ENCODE measurements at regions of chr2 and their contacts with region 1.

Region 1: DNA sequence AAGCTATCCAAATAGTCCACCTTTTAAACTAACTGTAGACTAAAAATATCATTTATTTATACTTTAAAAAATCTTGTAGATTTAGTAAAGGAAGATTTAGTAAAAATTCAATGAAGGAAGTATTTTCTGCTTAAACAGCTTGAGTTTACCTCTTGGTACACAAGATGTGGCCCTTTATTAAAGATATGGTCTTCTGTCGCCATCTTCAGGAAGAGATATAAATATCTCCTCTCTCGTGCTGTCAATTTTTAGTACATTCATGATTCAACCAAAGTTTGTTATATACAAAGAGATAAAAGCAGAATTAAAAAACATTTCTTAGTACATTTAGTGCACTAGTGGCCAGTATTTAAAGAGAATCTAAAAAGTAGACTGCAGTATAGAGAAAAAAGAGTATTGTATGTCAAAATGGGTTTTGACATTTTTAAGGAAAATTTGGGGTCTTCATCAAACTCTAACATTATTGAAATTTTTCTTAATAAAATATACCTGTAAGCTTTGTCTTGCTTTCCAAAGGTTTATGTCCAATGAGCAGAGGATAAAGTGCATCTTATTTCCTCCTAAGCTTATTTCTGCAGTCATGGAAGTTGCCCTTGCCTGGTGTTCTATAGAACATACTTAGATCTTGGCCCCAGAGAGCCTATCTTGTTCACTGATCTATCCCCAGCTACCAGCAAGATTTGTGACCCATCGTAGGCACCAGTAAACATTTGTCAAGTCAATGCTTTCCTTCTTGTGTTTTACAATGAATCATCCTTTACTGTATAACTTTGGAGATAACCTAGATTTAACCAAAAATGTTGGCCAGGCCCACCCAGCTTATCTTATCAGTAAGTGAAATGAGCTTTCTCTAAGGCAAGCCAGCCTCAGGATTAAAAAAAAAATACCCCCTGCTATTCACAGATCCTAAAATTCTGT is 18.5 kb upstream of the EML6 start:
- H3K4me3 ChIP-seq: no peak overlapping the region
- H3K27ac ChIP-seq: no peak overlapping the region
- H3K4me1 ChIP-seq: no peaks in the 10 kb centered on the region
- CTCF ChIP-seq: peak; percentile 47; the same call in 1 of the 2 replicates

Region 2: GRCh38 chr2:54176577-54176976 is 528.4 kb before region 1 on chr2:
- CTCF ChIA-PET with region 1: interaction called, 21 read pairs
- POLR2A ChIA-PET with region 1: interaction called, 3 read pairs
- H3K4me3 ChIP-seq: no peak overlapping the region
- H3K27ac ChIP-seq: no peak overlapping the region
- H3K4me1 ChIP-seq: no peaks in the 10 kb centered on the region
- CTCF ChIP-seq: peak; percentile 55; the same call in 1 of the 2 replicates

Region 3: GRCh38 chr2:54665436-54665856 is 39.5 kb before region 1 on chr2:
- CTCF ChIA-PET with region 1: interaction called, 64 read pairs
- POLR2A ChIA-PET with region 1: no interaction called
- H3K4me3 ChIP-seq: no peak overlapping the region
- H3K27ac ChIP-seq: no peak overlapping the region
- H3K4me1 ChIP-seq: no peaks in the 10 kb centered on the region
- CTCF ChIP-seq: 0 out of 2 replicates have a peak, but pooled peaks have one; percentile 17

Region 4: GRCh38 chr2:54691445-54692135 is 13.4 kb before region 1 on chr2:
- CTCF ChIA-PET with region 1: interaction called, 10 read pairs
- POLR2A ChIA-PET with region 1: no interaction called
- H3K4me3 ChIP-seq: no peak overlapping the region
- H3K27ac ChIP-seq: no peak overlapping the region
- H3K4me1 ChIP-seq: no peaks in the 10 kb centered on the region
- CTCF ChIP-seq: no peak

Region 5: DNA sequence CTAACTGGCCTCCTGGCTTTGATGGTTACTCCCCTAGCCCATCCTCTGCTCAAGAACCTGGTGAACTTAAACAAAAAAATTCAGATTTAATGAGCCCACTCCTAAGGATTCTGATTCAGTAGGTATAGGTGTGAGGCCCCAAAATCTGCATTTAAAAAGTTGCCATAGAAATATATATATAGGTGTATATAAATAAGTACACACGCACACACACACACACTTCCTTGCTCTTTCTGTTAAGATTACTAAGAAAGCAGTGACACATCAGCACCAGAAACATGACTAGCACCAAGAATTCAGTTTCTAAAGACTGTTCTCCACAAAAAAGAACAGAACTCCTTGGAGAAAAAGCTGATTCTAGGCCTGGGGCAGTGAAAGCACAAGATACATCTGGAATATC is 36.3 kb after region 1 on chr2:
- CTCF ChIA-PET with region 1: no interaction called
- POLR2A ChIA-PET with region 1: no interaction called
- H3K4me3 ChIP-seq: no peak overlapping the region
- H3K27ac ChIP-seq: no peak overlapping the region
- H3K4me1 ChIP-seq: 0 out of 2 replicates have a peak, but pooled peaks cover 3% of the 10 kb centered on the region
- CTCF ChIP-seq: no peak

Region 6: GRCh38 chr2:54809819-54810218 is 104.9 kb after region 1 on chr2:
- CTCF ChIA-PET with region 1: no interaction called
- POLR2A ChIA-PET with region 1: no interaction called
- H3K4me3 ChIP-seq: no peak overlapping the region
- H3K27ac ChIP-seq: no peak overlapping the region
- H3K4me1 ChIP-seq: no peaks in the 10 kb centered on the region
- CTCF ChIP-seq: no peak

Region 7: DNA sequence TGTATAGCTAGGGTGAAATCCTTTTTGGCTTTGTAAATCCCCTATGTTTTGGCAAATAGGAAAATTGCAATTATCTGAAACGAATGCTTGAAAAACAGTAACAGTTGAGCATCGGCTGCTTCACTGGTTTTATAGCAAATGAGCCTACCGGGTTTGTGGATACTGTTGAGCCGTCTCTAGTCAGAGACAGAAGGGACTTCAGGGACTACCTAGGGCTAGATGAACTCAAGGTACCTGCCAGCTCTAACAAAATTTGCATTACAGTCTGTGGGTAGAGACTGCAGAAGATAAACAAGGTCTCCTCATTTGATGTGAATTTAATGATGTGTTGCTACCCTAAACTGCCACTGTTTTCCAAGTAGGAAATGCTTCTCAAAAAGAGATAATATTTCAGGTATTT is 119.6 kb after region 1 on chr2:
- CTCF ChIA-PET with region 1: no interaction called
- POLR2A ChIA-PET with region 1: no interaction called
- H3K4me3 ChIP-seq: no peak overlapping the region
- H3K27ac ChIP-seq: no peak overlapping the region
- H3K4me1 ChIP-seq: no peaks in the 10 kb centered on the region
- CTCF ChIP-seq: no peak

Region 8: GRCh38 chr2:55063713-55064323 is 358.9 kb after region 1 on chr2:
- CTCF ChIA-PET with region 1: no interaction called
- POLR2A ChIA-PET with region 1: no interaction called
- H3K4me3 ChIP-seq: no peak overlapping the region
- H3K27ac ChIP-seq: no peak overlapping the region
- H3K4me1 ChIP-seq: no peaks in the 10 kb centered on the region
- CTCF ChIP-seq: no peak